Activated T-helper 1 cell treated with anti-CD3 and anti-CD28 coated beads, Interleukin-12 subunit alpha, Interleukin-12 subunit beta, Interleukin-2, Interleukin-4 antibody, amounts not matched to agents 30 ng/mL and 10 ng/mL and 1 ng/mL, durations not matched to agents 14 hours and 24 hours and 36 hours (primary cell): ENCODE measurements at regions of chr1 and their contacts with region 1.

Region 1: DNA sequence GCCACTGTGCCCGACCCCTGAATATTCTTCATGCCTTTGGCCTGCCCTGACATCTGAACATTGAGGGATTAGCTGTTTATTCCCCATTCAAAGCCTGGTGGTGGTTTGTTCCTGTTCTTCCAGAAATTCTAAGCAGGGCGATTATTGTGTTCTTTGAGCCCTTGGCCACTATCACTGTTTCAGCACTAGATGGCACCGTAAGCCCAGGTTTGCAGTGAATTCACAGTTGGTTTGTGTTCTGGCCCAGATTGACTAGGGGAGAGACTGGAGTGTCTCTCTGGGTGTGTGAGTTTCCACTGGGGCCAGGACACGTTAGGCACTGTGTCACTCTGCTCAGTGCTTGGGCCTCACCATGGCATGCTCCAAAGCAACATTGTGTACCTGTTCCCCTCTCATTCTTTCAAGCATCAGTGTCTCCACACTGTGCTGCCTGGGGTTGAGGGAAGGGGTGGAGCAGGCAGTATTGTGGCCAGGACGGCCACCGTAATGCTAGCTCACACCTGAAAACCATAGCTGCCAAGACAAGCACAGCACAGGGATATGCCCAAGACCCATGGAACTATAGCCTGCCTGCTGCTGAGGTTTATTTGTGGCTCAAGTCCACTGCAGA is 52.7 kb downstream of the PKN2 start:
- DNase-seq: peak; percentile 16
- H3K4me3 Mint-ChIP-seq: no peak overlapping the region
- H3K27ac Mint-ChIP-seq: no peak overlapping the region
- H3K4me1 Mint-ChIP-seq: peaks cover 17% of the 10 kb centered on the region
- H3K27me3 Mint-ChIP-seq: no peaks in the 10 kb centered on the region

Region 2: DNA sequence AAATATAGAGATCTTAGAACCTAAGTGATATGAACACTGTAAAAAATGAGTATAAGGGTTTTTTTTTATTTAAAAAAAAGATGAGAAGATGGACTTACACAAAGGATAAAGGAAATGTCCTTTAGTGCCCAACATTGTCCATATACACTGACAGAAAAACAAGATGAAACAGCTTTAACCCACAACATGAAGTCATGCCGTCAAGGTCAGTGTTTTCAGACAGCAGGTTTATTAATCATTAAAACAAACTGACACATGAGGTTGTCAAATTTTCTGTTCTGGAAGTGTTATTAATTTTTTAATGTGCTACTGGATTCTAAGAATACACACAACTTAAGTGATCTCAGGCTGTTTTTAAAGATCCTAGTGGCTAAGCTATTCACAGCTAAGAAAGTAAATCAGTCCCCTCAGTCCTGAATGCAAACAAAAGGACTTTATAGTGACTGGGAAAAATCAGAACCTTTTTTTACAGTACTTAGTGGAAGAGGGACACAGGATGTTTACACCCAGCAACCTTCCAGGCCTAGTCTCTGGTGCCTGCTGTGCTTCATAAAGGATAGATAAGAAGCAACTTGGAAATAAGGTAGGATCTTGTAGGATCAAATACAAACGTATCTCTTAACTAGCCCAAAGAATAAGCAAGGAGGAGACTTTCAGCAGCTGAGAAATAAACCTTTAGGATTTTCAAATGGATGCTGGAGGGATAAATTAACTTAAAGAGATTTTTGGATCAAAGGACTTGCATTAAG is 74.6 kb before region 1 on chr1:
- intact Hi-C with region 1: no loop called
- DNase-seq: no peak
- H3K4me3 Mint-ChIP-seq: no peak overlapping the region
- H3K27ac Mint-ChIP-seq: no peak overlapping the region
- H3K4me1 Mint-ChIP-seq: peaks cover 30% of the 10 kb centered on the region
- H3K27me3 Mint-ChIP-seq: peaks cover 6% of the 10 kb centered on the region

Region 3: DNA sequence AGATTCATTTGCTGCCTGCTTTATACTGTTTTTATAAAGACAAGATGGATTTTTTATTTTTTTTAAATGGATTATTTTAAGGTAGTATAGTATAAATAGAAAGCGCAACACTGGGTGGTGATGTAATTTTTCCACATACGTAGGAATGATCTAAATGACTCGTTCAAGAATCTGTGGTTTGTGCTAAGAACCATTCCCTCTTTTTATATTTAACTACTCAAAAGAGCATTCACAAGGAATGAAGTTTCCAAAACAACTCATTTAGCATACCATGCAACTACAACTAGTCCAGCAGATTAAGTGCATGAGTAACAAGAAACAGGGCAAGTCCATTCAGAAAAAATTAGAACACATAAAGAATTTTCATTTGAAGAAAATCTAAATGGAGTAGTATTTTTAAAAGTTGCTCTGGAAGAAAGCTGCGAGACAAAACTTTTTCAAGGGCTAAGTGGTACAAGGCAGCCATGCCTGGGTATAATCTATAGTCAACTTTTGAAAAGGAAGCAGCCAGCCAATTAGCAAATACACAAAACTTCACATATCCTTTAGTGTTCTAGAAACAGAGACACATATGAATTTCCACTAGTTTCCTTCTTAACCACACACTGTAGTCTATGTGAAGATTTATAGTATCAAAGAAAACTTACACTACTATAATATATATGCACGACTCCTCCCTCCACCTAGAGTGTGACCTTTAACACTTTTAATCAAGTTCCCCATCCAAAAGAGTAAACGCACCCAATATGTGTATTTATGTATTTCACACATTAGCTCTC is 131.2 kb after region 1 on chr1:
- intact Hi-C with region 1: loop called (anchors 5 kb)
- DNase-seq: no peak
- H3K4me3 Mint-ChIP-seq: peak overlapping the region; percentile 60
- H3K27ac Mint-ChIP-seq: peak overlapping the region; percentile 87
- H3K4me1 Mint-ChIP-seq: peaks cover 35% of the 10 kb centered on the region
- H3K27me3 Mint-ChIP-seq: no peaks in the 10 kb centered on the region

Region 4: DNA sequence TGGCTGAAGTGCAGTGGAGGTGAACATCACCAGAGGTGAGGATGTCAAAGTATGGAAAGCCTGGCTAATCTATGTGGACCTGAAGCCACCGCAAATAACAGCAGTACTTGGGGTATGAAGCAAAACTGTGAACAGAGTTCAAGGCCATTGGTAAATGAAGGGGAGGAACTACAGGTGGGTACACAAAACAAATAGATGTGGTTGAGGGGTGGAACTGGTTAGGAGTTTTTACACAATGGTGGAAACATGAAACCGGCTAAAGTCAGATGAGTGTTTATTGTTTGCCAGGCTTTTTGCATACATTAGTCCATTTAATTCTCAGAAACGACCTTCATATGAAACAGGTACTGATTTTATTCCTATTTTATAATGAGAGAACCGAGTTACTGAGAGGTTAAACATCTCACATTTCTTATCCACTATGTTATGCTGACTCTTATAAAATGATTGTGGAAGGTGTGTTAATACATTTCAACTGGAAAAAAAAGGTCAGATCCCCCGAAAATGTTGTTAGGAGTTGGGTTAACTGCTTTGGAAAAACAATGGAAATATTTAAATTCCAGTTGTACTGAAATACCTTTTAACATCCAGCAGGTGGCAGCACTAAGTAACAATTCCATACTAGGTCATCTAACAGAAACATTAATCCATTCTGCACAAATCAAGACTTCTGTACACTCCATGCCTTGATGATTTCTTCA is 198.9 kb after region 1 on chr1:
- intact Hi-C with region 1: loop called (anchors 2 kb)
- DNase-seq: no peak
- H3K4me3 Mint-ChIP-seq: no peak overlapping the region
- H3K27ac Mint-ChIP-seq: no peak overlapping the region
- H3K4me1 Mint-ChIP-seq: no peaks in the 10 kb centered on the region
- H3K27me3 Mint-ChIP-seq: no peaks in the 10 kb centered on the region